Body of pancreas (tissue), 4 donors: ENCODE measurements at regions of chr9 and their contacts with region 1.

Region 1: DNA sequence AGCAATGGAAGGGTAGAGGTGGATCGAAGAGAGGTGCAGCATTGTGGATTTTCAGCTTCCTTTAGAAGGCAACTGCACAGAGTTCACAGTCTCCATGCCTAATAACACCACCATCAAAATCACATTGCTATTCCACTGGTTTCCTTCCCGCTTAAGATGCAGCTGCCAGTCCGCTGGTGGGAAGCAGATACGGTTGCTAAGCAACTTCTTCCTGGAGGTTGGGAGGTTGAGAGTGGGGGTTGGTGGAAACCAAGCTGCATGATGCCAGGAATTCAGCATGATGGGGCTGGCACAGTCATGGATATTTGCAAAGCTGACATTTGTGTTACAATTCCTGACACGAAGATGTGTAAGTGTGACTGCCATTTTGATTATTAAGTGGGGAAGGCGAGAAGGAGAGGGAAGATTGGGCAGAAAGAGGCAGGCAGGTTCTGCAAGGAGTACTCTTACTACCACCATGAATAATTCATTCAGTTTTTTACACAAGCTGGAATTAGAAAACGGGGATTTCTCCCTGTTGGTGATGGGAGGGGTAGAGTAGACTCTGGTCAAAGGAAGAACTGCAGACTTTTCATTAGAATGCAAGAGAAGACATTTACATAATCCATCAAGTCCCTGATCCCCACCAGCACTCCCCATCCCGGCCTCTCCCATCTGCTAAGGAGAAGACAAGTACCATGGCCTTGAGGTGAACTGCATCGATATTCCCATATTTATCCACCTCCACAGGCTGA is 87.5 kb downstream of the GLDC start:
- DNase-seq: no peak
- ATAC-seq: no peak
- H3K4me3 ChIP-seq: no peak overlapping the region
- H3K27ac ChIP-seq: no peak overlapping the region
- H3K4me1 ChIP-seq: no peaks in the 10 kb centered on the region
- H3K27me3 ChIP-seq: no peaks in the 10 kb centered on the region
- CTCF ChIP-seq: no peak
- POLR2A ChIP-seq: no peak

Region 2: GRCh38 chr9:6133346-6134063 is 424.5 kb before region 1 on chr9:
- intact Hi-C with region 1: no loop called
- DNase-seq: no peak
- ATAC-seq: no peak
- H3K4me3 ChIP-seq: no peak overlapping the region
- H3K27ac ChIP-seq: no peak overlapping the region
- H3K4me1 ChIP-seq: no peaks in the 10 kb centered on the region
- H3K27me3 ChIP-seq: no peaks in the 10 kb centered on the region
- CTCF ChIP-seq: no peak
- POLR2A ChIP-seq: no peak

Region 3: DNA sequence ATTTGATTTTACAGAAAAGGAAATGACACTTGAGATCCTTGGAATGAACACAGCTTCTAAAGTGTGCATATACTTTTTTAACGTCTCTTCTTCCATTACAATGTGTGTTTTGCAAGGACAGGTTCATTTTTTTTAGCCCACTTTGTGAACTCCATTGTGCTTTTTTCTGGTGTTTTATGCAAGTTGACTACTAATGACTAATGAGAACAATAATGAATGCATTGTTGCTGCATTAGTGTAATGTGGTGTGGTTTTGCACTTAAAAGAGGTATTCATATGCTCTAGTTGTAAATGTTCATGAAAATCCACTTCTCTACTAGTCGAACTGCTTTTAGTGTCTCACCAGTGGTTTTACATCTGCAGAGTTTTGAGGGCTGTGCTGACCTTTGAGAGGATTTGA is 51.5 kb before region 1 on chr9:
- intact Hi-C with region 1: loop called (anchors 5 kb)
- DNase-seq: no peak
- ATAC-seq: no peak
- H3K4me3 ChIP-seq: no peak overlapping the region
- H3K27ac ChIP-seq: no peak overlapping the region
- H3K4me1 ChIP-seq: no peaks in the 10 kb centered on the region
- H3K27me3 ChIP-seq: no peaks in the 10 kb centered on the region
- CTCF ChIP-seq: no peak
- POLR2A ChIP-seq: no peak